Thyroid gland (tissue), 4 donors: ENCODE measurements at regions of chr1 and their contacts with region 1.

Region 1: GRCh38 chr1:31564134-31564989 is 12.0 kb upstream of the TINAGL1 start:
- DNase-seq: peak; percentile 63 to 66
- H3K4me3 ChIP-seq: no peak overlapping the region
- H3K27ac ChIP-seq: peak overlapping the region; percentile 10 to 46 (median 14)
- H3K4me1 ChIP-seq: peaks cover 16 to 38% of the 10 kb centered on the region in 2 donors
- H3K27me3 ChIP-seq: no peaks in the 10 kb centered on the region
- CTCF ChIP-seq: peak; percentile 70 to 96 (median 92)
- POLR2A ChIP-seq: no peak

Region 2: DNA sequence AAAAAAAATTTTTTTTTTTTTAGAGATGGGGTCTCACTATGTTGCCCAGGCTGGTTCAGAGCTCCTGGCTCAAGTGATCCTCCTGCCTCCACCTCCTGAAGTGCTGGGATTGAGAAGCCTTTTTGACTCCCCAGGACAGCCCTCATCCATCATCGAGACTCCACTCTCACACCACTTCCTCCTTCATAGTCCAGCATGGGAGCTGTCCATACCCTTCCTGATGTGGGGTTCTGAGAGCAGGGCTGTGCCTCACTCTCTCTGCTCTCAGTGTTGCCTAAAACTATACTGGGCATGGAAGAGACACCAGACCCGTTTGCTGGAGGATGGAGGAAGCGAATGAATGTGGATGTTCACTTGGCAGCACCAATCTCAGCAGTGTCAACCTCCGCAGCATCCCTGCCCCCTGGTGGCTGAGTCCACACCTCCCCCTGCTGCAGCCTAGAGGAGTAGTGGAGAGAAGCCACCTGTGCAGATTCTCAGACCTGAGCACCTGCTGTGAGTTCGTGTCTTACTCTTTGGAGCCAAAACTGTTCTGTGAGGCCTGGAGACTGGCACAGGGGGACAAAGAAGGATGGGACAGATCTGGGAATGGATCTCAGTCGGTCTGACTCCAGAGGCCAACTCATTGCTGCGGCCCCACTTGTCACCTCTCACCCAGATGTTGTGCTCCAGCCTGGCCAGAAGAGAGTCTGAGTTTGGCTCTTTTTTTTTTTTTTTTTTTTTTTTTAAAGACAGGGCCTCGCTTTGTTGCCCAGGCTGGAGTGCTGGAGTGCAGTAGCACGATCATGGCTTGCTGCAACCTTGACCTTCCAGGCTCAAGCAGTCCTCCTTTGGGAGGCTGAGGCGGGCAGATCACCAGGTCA is 29.6 kb after region 1 on chr1:
- intact Hi-C with region 1: loop called (anchors 2 kb)
- DNase-seq: peak; percentile 87 to 89
- H3K4me3 ChIP-seq: no peak overlapping the region
- H3K27ac ChIP-seq: no peak overlapping the region
- H3K4me1 ChIP-seq: peaks cover 8 to 16% of the 10 kb centered on the region in 2 donors
- H3K27me3 ChIP-seq: no peaks in the 10 kb centered on the region
- CTCF ChIP-seq: peak; percentile 84 to 92 (median 88)
- POLR2A ChIP-seq: peak in 1 of 2 donors; percentile 7